ENCODE measurements at regions of chr19 and their contacts with region 1.

Region 1: GRCh38 chr19:46661020-46661731 is at the start of gene DACT3:
- DNase-seq: peak; percentile 100
- ATAC-seq: peak; percentile 88
- H3K4me3 Mint-ChIP-seq: peak within 1 kb of the TSS; percentile 74
- H3K27ac Mint-ChIP-seq: peak within 1 kb of the TSS; percentile 69
- H3K4me1 Mint-ChIP-seq: peaks cover 25% of the 10 kb centered on the region
- H3K27me3 Mint-ChIP-seq: peaks cover 22% of the 10 kb centered on the region
- CTCF ChIP-seq: no peak
- total RNA-seq, gene DACT3: 5.8 to 6.1 TPM

Region 2: GRCh38 chr19:46508206-46508605 is 153.0 kb before region 1 on chr19:
- CTCF ChIA-PET with region 1: no interaction called
- POLR2A ChIA-PET with region 1: no interaction called
- intact Hi-C with region 1: no loop called
- DNase-seq: no peak
- ATAC-seq: no peak
- H3K4me3 Mint-ChIP-seq: no peak overlapping the region
- H3K27ac Mint-ChIP-seq: no peak overlapping the region
- H3K4me1 Mint-ChIP-seq: no peaks in the 10 kb centered on the region
- H3K27me3 Mint-ChIP-seq: peaks cover 17% of the 10 kb centered on the region
- CTCF ChIP-seq: no peak

Region 3: GRCh38 chr19:46520616-46521015 is 140.6 kb before region 1 on chr19:
- CTCF ChIA-PET with region 1: interaction called, 24 read pairs
- POLR2A ChIA-PET with region 1: interaction called, 7 read pairs
- intact Hi-C with region 1: loop called (anchors 5 kb)
- DNase-seq: peak; percentile 26
- ATAC-seq: no peak
- H3K4me3 Mint-ChIP-seq: no peak overlapping the region
- H3K27ac Mint-ChIP-seq: peak overlapping the region; percentile 64
- H3K4me1 Mint-ChIP-seq: peaks cover 41% of the 10 kb centered on the region
- H3K27me3 Mint-ChIP-seq: no peaks in the 10 kb centered on the region
- CTCF ChIP-seq: no peak

Region 4: DNA sequence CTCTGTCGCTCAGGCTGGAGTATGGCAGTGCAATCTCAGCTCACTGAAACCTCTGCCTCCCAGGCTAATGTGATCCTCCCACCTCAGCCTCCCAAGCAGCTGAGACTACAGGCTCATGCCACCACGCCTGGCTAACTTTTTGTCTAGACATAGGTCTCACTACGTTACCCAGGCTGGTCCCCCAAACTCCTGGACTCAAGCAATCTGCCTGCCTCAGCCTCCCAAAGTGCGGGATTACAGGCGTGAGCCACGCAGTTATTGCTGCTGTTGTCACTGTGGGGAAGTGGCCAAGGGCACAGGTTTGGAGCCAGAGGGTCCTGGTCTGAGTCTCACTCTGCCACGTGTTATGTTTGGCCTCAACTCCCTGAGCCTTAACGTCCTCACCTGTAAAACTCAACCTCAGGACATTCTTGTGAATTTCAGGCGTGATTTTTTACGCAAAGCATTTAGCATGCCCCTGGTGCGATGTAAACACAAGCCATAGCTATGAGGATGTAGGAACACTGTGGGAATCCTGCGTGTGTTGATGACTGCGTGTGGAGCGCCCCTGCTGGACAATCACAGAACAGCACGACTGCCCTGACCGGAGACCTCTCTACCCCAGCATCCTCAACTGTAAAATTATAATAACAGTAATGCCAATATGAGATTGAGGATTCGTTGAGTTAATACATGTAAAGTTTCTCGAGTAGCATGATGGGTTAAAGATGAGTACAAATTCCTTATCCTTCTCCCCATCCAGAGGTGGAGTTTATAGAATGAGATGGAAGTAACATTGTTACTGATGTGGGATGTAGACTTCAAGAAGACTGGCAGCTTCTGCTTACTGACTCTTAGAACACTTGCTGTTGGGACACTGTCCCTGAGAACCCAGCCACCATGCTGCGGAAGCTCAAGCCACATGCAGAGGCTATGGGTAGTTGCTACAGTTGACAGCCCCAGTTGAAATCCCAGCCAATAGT is 123.8 kb before region 1 on chr19:
- CTCF ChIA-PET with region 1: interaction called, 19 read pairs
- POLR2A ChIA-PET with region 1: no interaction called
- intact Hi-C with region 1: no loop called
- DNase-seq: peak; percentile 77
- ATAC-seq: peak; percentile 83
- H3K4me3 Mint-ChIP-seq: no peak overlapping the region
- H3K27ac Mint-ChIP-seq: no peak overlapping the region
- H3K4me1 Mint-ChIP-seq: no peaks in the 10 kb centered on the region
- H3K27me3 Mint-ChIP-seq: peaks cover 1% of the 10 kb centered on the region
- CTCF ChIP-seq: peak; percentile 99

Region 5: GRCh38 chr19:46600384-46601317 is 60.5 kb before region 1 on chr19:
- CTCF ChIA-PET with region 1: interaction called, 300 read pairs
- POLR2A ChIA-PET with region 1: interaction called, 26 read pairs
- intact Hi-C with region 1: no loop called
- DNase-seq: peak; percentile 99
- ATAC-seq: peak; percentile 90
- H3K4me3 Mint-ChIP-seq: peak overlapping the region; percentile 99
- H3K27ac Mint-ChIP-seq: peak overlapping the region; percentile 100
- H3K4me1 Mint-ChIP-seq: peaks cover 27% of the 10 kb centered on the region
- H3K27me3 Mint-ChIP-seq: no peaks in the 10 kb centered on the region
- CTCF ChIP-seq: no peak

Region 6: DNA sequence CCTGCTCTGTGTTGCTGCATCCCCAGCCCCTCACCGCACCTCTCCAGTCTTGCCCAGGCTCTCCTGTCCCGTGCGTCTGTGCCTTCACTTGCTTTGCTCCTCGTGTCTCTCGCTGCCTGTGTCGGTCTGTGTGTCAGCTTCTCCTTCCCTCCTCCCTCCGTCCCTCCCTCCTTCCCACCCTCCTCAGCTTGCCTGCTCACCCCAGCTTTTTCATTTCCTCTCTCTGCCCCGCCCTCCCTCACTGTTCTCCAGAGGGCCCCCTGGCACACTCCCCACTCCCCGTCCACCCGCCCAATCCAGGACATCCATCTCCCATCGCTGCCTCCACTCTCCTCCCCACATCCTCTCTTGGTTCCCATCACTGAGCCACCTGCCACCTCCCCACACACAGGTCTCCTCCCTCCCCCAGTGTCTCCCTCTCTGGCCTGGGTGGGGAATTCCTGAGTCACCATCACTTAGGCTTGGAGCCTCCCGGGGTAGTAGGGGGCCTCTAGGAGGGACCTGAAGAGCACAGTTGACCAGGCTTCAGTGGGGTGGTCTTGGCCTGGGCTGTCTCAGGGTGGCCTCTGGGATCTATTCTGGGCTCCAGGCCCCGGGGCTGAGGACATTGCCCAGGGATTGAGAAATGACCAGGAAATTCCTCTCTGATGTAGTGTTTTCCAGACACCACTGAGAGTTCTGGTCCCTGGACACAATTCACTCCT is 36.1 kb before region 1 on chr19 and contains the start of gene PTGIR:
- CTCF ChIA-PET with region 1: interaction called, 300 read pairs
- POLR2A ChIA-PET with region 1: interaction called, 4 read pairs
- intact Hi-C with region 1: no loop called
- DNase-seq: peak; percentile 62
- ATAC-seq: peak; percentile 64
- H3K4me3 Mint-ChIP-seq: peak within 1 kb of the TSS; percentile 96
- H3K27ac Mint-ChIP-seq: peak within 1 kb of the TSS; percentile 96
- H3K4me1 Mint-ChIP-seq: peaks cover 49% of the 10 kb centered on the region
- H3K27me3 Mint-ChIP-seq: peaks cover 3% of the 10 kb centered on the region
- CTCF ChIP-seq: no peak
- total RNA-seq, gene PTGIR: 45.4 to 48.8 TPM

Region 7: GRCh38 chr19:46648060-46648960 is 12.9 kb before region 1 on chr19:
- CTCF ChIA-PET with region 1: interaction called, 11 read pairs
- POLR2A ChIA-PET with region 1: interaction called, 5 read pairs
- intact Hi-C with region 1: no loop called
- DNase-seq: peak; percentile 43
- ATAC-seq: peak; percentile 65
- H3K4me3 Mint-ChIP-seq: no peak overlapping the region
- H3K27ac Mint-ChIP-seq: no peak overlapping the region
- H3K4me1 Mint-ChIP-seq: peaks cover 4% of the 10 kb centered on the region
- H3K27me3 Mint-ChIP-seq: peaks cover 37% of the 10 kb centered on the region
- CTCF ChIP-seq: no peak

Region 8: DNA sequence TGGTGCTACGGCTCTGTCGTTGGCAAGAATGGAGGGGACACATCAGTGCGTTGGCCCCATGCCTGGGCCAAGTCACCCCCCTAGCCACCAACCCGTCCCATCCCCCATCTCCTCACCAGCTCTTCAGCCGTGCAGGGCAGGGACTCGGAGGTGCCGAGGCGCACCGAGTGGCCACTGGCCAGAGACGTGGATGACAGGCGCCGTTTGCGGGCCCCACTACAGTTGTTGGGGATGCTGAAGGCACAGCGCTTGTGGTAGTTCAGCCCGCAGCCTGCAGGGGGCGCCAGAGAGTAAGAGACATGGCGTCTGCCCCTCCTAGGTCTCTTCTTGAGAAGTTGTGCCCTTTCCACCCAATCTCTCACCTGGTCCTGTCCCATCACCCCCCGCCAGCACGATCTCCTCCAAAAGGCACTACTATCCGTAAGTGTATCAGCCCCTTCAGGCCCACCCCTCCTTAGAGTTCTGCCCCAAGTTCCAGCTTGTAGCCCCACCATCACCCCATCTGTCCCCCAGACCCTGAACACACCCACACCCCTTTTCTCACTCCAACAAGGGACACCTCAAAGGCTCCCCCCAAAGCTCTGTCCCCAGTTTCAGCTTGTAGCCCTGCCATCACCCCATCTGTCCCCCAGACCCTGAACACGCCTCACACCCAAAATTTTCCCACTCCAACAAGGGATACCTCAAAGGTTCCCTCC is 43.4 kb after region 1 on chr19:
- CTCF ChIA-PET with region 1: interaction called, 15 read pairs
- POLR2A ChIA-PET with region 1: no interaction called
- intact Hi-C with region 1: no loop called
- DNase-seq: peak; percentile 94
- ATAC-seq: peak; percentile 98
- H3K4me3 Mint-ChIP-seq: no peak overlapping the region
- H3K27ac Mint-ChIP-seq: peak overlapping the region; percentile 57
- H3K4me1 Mint-ChIP-seq: peaks cover 7% of the 10 kb centered on the region
- H3K27me3 Mint-ChIP-seq: no peaks in the 10 kb centered on the region
- CTCF ChIP-seq: peak; percentile 95

Measured in activated CD8-positive, alpha-beta T cell treated with anti-CD3 and anti-CD28 coated beads for 36 hours (primary cell).